BJ (cell line): ENCODE measurements at regions of chr4 and their contacts with region 1.

Region 1: DNA sequence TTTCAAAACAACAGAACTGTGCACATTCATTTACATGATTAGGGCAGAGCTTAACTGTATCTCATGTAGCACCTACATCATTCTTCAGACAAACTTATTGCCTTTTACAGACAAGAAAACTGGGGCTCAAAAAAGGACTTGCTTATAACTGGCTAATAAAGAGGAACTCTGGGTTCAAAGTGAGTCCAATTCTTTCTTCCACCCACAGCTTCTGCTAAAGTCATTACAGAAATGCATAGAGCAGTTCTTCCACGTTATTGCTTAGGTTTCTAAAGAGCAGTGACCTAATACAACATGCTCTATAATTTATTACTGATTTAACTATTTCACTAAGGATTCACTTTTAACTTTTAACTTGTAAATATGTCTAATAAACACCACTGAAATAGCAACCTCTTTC is 60.6 kb downstream of the ELOVL6 start:
- DNase-seq: no peak
- H3K4me3 ChIP-seq: no peak overlapping the region
- H3K27me3 ChIP-seq: no peaks in the 10 kb centered on the region
- CTCF ChIP-seq: no peak

Region 2: GRCh38 chr4:110119337-110119736 is 18.5 kb before region 1 on chr4:
- CTCF ChIA-PET with region 1: interaction called, 4 read pairs
- POLR2A ChIA-PET with region 1: interaction called, 14 read pairs
- DNase-seq: no peak
- H3K4me3 ChIP-seq: no peak overlapping the region
- H3K27me3 ChIP-seq: no peaks in the 10 kb centered on the region
- CTCF ChIP-seq: no peak